IMR-90 (cell line): ENCODE measurements at regions of chr6 and their contacts with region 1.

Region 1: GRCh38 chr6:2988426-2989331 is 11.0 kb upstream of the NQO2 start:
- DNase-seq: peak; percentile 95
- ATAC-seq: peak; percentile 83
- H3K4me3 ChIP-seq: peak overlapping the region; percentile 72
- H3K27ac ChIP-seq: peak overlapping the region; percentile 90
- H3K4me1 ChIP-seq: peaks cover 14% of the 10 kb centered on the region
- H3K27me3 ChIP-seq: no peaks in the 10 kb centered on the region
- CTCF ChIP-seq: peak; percentile 89
- POLR2A ChIP-seq: peak; percentile 61
- RAD21 ChIP-seq: peak; percentile 84

Region 2: GRCh38 chr6:1596088-1596852 is 1392.4 kb before region 1 on chr6:
- CTCF ChIA-PET with region 1: interaction called, 3 read pairs
- POLR2A ChIA-PET with region 1: no interaction called
- dilution Hi-C with region 1: no loop called
- in situ Hi-C with region 1: no loop called
- intact Hi-C with region 1: loop called (anchors 5 kb)
- DNase-seq: peak; percentile 45
- ATAC-seq: peak; percentile 89
- H3K4me3 ChIP-seq: peak overlapping the region; percentile 49
- H3K27ac ChIP-seq: no peak overlapping the region; the same call in 1 of the 2 replicates
- H3K4me1 ChIP-seq: peaks cover 11% of the 10 kb centered on the region
- H3K27me3 ChIP-seq: peaks cover 23% of the 10 kb centered on the region
- CTCF ChIP-seq: peak; percentile 89
- POLR2A ChIP-seq: 0 out of 2 replicates have a peak, but pooled peaks have one; percentile 38
- RAD21 ChIP-seq: peak; percentile 91

Region 3: DNA sequence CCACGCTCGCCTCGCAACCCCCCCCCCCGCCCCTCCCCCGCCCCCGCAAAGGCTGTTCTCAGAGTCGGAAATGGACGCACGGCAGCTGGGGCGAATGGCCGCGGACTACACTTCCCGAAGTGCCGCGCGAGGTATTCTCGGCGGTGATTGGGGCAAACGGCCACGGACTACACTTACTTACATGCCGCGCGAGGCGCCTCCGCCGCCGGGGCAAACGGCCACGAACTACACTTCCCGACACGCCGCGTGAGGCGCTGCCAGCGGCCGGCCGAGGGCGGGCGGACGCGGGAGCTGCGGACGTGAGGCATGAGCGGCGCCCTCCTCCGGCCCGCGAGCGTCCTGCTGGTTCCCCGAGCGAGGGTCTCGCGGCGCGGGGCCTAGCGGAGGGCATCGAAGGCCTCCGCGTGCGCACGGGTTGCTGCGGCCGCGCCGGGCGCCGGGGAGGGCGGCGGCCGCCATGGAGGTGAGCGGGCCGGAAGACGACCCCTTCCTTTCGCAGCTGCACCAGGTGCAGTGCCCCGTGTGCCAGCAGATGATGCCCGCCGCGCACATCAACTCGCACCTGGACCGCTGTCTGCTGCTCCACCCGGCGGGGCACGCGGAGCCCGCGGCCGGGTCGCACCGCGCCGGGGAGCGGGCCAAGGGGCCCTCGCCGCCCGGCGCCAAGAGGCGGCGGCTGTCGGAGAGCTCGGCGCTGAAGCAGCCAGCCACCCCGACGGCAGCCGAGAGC is 223.3 kb before region 1 on chr6 and contains the start of gene WRNIP1:
- CTCF ChIA-PET with region 1: no interaction called
- POLR2A ChIA-PET with region 1: no interaction called
- dilution Hi-C with region 1: no loop called
- in situ Hi-C with region 1: no loop called
- intact Hi-C with region 1: loop called (anchors 10 kb)
- DNase-seq: peak; percentile 99
- ATAC-seq: peak; percentile 91
- H3K4me3 ChIP-seq: peak within 1 kb of the TSS; percentile 79
- H3K27ac ChIP-seq: peak within 1 kb of the TSS; percentile 86
- H3K4me1 ChIP-seq: peaks cover 18% of the 10 kb centered on the region
- H3K27me3 ChIP-seq: no peaks in the 10 kb centered on the region
- CTCF ChIP-seq: peak; percentile 86
- POLR2A ChIP-seq: peak; percentile 46
- RAD21 ChIP-seq: peak; percentile 24; the same call in 1 of the 2 replicates
- total RNA-seq, gene WRNIP1: 37.2 and 47.1 TPM in 2 replicates

Region 4: GRCh38 chr6:2841264-2842138 is 147.2 kb before region 1 on chr6 and contains the start of gene SERPINB1:
- CTCF ChIA-PET with region 1: interaction called, 13 read pairs
- POLR2A ChIA-PET with region 1: interaction called, 12 read pairs
- dilution Hi-C with region 1: no loop called
- in situ Hi-C with region 1: no loop called
- intact Hi-C with region 1: loop called (anchors 1 kb)
- DNase-seq: peak; percentile 97
- ATAC-seq: peak; percentile 92
- H3K4me3 ChIP-seq: peak within 1 kb of the TSS; percentile 34
- H3K27ac ChIP-seq: peak within 1 kb of the TSS; percentile 80
- H3K4me1 ChIP-seq: peaks cover 19% of the 10 kb centered on the region
- H3K27me3 ChIP-seq: no peaks in the 10 kb centered on the region
- CTCF ChIP-seq: no peak
- POLR2A ChIP-seq: peak; percentile 79
- RAD21 ChIP-seq: peak; percentile 16; the same call in 1 of the 2 replicates
- total RNA-seq, gene SERPINB1: 6.1 TPM in 2 replicates

Region 5: GRCh38 chr6:2952557-2953095 is 36.1 kb before region 1 on chr6:
- CTCF ChIA-PET with region 1: interaction called, 37 read pairs
- POLR2A ChIA-PET with region 1: interaction called, 3 read pairs
- dilution Hi-C with region 1: no loop called
- in situ Hi-C with region 1: no loop called
- intact Hi-C with region 1: loop called (anchors 1 kb)
- DNase-seq: peak; percentile 91
- ATAC-seq: peak; percentile 99
- H3K4me3 ChIP-seq: no peak overlapping the region
- H3K27ac ChIP-seq: peak overlapping the region; percentile 25
- H3K4me1 ChIP-seq: peaks cover 3% of the 10 kb centered on the region; the same call in 1 of the 2 replicates
- H3K27me3 ChIP-seq: no peaks in the 10 kb centered on the region
- CTCF ChIP-seq: peak; percentile 94
- POLR2A ChIP-seq: no peak
- RAD21 ChIP-seq: peak; percentile 80

Region 6: DNA sequence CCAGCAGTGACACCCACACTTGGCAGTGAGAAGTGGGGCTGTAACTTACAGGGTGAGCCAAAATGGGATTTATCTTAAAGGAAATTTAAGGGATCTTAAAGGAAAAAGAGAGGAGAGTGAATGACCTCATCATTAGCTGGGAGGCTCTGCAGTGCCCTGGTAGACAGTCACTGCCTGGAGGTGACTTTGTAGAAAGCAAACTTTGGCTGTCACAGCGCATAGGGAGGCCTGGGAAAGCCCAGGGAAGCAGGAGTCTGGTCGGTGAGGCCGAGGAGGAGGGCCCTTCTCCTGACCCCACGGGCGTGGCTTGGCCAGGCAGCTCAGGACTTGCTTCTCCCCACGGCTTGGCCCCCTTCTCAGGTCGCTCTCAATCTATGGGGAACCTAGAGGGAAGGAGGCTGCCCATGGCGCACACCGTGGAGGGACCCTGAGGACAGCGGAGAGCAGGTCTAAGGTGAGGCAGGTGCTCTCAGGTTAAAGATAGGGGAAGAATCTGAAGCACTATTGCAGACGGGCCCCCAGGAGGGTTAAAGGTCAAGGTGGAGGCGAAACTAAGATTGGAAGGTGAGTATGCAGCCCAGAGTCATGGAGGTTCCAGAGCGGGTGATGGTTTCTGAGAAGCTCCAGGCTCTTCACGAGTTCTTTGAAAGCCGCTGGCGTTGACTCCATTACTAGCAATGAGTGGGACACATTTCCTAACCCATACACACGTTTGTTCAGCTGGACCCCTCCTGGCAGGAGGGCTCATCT is 64.0 kb after region 1 on chr6:
- CTCF ChIA-PET with region 1: no interaction called
- POLR2A ChIA-PET with region 1: no interaction called
- dilution Hi-C with region 1: no loop called
- in situ Hi-C with region 1: loop called (anchors 10 kb)
- intact Hi-C with region 1: no loop called
- DNase-seq: no peak
- ATAC-seq: no peak
- H3K4me3 ChIP-seq: no peak overlapping the region
- H3K27ac ChIP-seq: no peak overlapping the region
- H3K4me1 ChIP-seq: no peaks in the 10 kb centered on the region
- H3K27me3 ChIP-seq: peaks cover 14% of the 10 kb centered on the region; the same call in 1 of the 2 replicates
- CTCF ChIP-seq: no peak
- POLR2A ChIP-seq: no peak
- RAD21 ChIP-seq: no peak

Region 7: GRCh38 chr6:3490626-3490980 is 501.9 kb after region 1 on chr6:
- CTCF ChIA-PET with region 1: no interaction called
- POLR2A ChIA-PET with region 1: no interaction called
- dilution Hi-C with region 1: no loop called
- in situ Hi-C with region 1: no loop called
- intact Hi-C with region 1: no loop called
- DNase-seq: peak; percentile 23
- ATAC-seq: no peak
- H3K4me3 ChIP-seq: no peak overlapping the region
- H3K27ac ChIP-seq: no peak overlapping the region
- H3K4me1 ChIP-seq: no peaks in the 10 kb centered on the region
- H3K27me3 ChIP-seq: peaks cover 62% of the 10 kb centered on the region
- CTCF ChIP-seq: no peak
- POLR2A ChIP-seq: no peak
- RAD21 ChIP-seq: no peak

Region 8: GRCh38 chr6:3721810-3722626 is 733.3 kb after region 1 on chr6:
- CTCF ChIA-PET with region 1: no interaction called
- POLR2A ChIA-PET with region 1: no interaction called
- dilution Hi-C with region 1: no loop called
- in situ Hi-C with region 1: no loop called
- intact Hi-C with region 1: no loop called
- DNase-seq: peak; percentile 51
- ATAC-seq: no peak
- H3K4me3 ChIP-seq: no peak overlapping the region
- H3K27ac ChIP-seq: no peak overlapping the region
- H3K4me1 ChIP-seq: no peaks in the 10 kb centered on the region
- H3K27me3 ChIP-seq: no peaks in the 10 kb centered on the region
- CTCF ChIP-seq: no peak
- POLR2A ChIP-seq: no peak
- RAD21 ChIP-seq: no peak